CD4-positive, alpha-beta T cell (primary cell): ENCODE measurements at regions of chr5 and their contacts with region 1.

Region 1: GRCh38 chr5:134738133-134738962 is at the start of gene CAMLG:
- DNase-seq: peak; percentile 92 to 99 (median 96)
- ATAC-seq: peak; percentile 96
- H3K4me3 ChIP-seq: peak within 1 kb of the TSS; percentile 98
- H3K4me3 Mint-ChIP-seq: peak within 1 kb of the TSS; percentile 92
- H3K27ac ChIP-seq: peak within 1 kb of the TSS; percentile 77 to 93
- H3K27ac Mint-ChIP-seq: peak within 1 kb of the TSS; percentile 86
- H3K4me1 ChIP-seq: peaks cover 28% of the 10 kb centered on the region
- H3K4me1 Mint-ChIP-seq: peaks cover 34% of the 10 kb centered on the region
- H3K27me3 ChIP-seq: no peaks in the 10 kb centered on the region
- H3K27me3 Mint-ChIP-seq: no peaks in the 10 kb centered on the region
- CTCF ChIP-seq: peak; percentile 63
- total RNA-seq, gene CAMLG: 49.3 to 51.1 TPM

Region 2: DNA sequence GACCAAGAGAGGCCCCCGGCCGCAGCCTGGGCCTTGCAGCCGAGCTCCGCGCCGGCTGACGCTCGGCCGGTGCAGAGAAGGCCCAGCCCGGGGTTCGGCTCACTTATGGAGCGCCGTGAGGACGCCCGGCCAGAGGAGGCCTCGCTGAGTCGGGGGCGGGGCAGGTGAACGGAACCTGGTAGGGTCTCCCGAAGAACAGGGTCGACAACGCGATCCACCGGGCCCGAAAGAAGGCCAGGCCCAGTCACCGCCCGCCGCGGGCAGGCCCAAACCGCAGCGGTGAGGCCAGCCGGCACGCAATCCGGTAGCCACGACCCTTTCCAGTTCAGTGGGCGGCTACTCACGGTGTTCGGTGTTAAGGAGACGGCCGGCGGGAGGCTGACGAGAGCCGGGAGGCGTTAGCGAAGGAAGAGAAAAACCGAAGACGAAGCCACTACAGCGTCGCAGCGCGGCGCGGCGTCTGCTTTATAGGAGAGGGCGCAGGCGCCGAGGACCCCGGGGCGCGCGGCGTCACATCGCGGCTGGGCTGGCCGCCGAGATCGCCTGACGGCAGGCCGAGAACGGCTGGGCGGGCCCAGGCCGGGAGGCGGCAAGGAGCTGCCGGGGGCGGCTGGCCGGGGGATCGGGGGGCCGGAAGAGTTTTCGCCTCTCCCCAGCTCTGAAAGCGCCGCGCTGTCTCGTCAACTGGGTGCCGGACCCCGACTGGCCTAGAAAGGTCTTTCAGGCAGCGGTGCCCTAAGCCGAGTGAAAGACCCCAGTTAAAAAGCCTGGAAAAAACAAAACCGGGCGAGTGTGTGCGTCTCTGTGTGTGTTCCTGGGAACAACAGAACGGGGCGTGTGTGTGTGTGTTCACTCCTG is 561.6 kb before region 1 on chr5 and contains the start of gene SKP1:
- CTCF ChIA-PET with region 1: no interaction called
- POLR2A ChIA-PET with region 1: no interaction called
- intact Hi-C with region 1: loop called in 1 of 2 experiments (anchors 5 kb)
- DNase-seq: peak; percentile 76 to 94 (median 86)
- ATAC-seq: peak; percentile 83
- H3K4me3 ChIP-seq: peak within 1 kb of the TSS; percentile 98
- H3K4me3 Mint-ChIP-seq: peak within 1 kb of the TSS; percentile 97
- H3K27ac ChIP-seq: peak within 1 kb of the TSS; percentile 98 to 99
- H3K27ac Mint-ChIP-seq: peak within 1 kb of the TSS; percentile 98
- H3K4me1 ChIP-seq: peaks cover 19% of the 10 kb centered on the region
- H3K4me1 Mint-ChIP-seq: peaks cover 36% of the 10 kb centered on the region
- H3K27me3 ChIP-seq: no peaks in the 10 kb centered on the region
- H3K27me3 Mint-ChIP-seq: no peaks in the 10 kb centered on the region
- CTCF ChIP-seq: no peak
- total RNA-seq, gene SKP1: 303 to 314 TPM

Region 3: DNA sequence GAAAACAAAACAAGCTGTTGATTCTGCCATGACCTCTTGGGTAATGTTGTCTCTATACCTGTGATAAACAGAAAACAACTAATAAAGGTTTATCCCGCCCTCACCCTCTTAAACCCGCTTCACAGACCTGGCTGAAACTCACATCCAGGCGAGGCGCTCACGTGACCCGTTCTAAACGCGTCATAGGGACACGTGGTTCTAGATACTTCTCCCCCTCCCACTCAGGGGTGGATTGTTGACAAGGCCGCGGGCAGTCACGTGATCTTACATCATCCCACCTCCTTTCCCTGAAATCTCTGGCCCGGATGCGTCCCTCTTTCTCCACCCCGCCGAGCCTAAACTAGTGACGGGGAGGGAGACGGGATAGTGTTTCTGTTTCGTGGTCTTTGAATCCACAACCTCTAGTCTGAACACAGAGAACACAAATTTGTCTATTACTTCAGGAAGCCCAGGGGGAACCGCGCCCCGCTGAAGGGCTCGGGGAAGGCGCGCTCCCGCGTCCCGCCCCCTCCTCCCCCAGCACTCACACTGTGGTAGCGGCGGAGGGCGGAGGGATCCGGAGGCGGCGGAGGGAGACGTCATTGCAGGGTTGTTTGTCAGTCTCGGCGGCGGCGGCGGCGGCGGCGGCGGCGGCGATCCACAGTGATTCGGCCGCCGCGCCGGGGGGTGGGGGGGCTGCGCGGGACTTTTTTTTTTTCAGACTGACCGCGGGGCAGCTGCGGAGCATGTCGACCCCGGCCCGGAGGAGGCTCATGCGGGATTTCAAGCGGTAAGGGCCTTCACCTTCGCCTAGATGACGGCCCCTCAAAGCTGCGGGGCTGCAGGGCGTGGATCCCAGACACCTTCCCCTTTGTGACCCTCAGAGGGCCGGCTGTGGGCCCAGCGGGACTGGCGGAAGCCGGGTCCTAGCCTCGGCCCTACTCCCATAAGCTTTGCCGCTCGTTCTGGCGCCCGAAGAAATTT is 367.2 kb before region 1 on chr5 and contains the start of gene UBE2B:
- CTCF ChIA-PET with region 1: interaction called, 4 read pairs
- POLR2A ChIA-PET with region 1: interaction called, 3 read pairs
- intact Hi-C with region 1: loop called in 1 of 2 experiments (anchors 5 kb)
- DNase-seq: peak; percentile 93 to 99 (median 97)
- ATAC-seq: peak; percentile 73
- H3K4me3 ChIP-seq: peak within 1 kb of the TSS; percentile 100
- H3K4me3 Mint-ChIP-seq: peak within 1 kb of the TSS; percentile 96
- H3K27ac ChIP-seq: peak within 1 kb of the TSS; percentile 97 to 98
- H3K27ac Mint-ChIP-seq: peak within 1 kb of the TSS; percentile 97
- H3K4me1 ChIP-seq: peaks cover 37% of the 10 kb centered on the region
- H3K4me1 Mint-ChIP-seq: peaks cover 68% of the 10 kb centered on the region
- H3K27me3 ChIP-seq: no peaks in the 10 kb centered on the region
- H3K27me3 Mint-ChIP-seq: peaks cover 4% of the 10 kb centered on the region
- CTCF ChIP-seq: no peak
- total RNA-seq, gene UBE2B: 225 to 228 TPM

Region 4: DNA sequence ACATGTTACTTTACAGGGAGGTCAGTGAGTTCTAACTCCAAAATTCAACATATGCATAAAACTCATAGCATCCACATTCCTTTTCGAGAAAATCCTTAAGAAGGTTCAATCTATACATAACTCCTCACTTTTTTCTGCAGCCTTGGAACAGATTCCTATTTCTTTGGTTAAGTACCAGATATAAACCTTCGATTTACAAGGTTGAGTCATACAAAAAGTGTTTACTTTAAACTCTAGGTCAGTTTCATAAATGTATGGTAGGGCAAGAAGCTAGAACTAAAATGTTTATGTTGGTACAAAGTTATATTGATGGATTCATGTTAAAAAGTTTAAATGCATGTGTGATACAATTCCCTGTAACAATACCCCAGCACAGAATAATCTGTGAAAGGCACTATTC is 346.0 kb before region 1 on chr5:
- CTCF ChIA-PET with region 1: no interaction called
- POLR2A ChIA-PET with region 1: no interaction called
- intact Hi-C with region 1: no loop called
- DNase-seq: no peak
- ATAC-seq: no peak
- H3K4me3 ChIP-seq: no peak overlapping the region
- H3K4me3 Mint-ChIP-seq: no peak overlapping the region
- H3K27ac ChIP-seq: no peak overlapping the region
- H3K27ac Mint-ChIP-seq: no peak overlapping the region
- H3K4me1 ChIP-seq: no peaks in the 10 kb centered on the region
- H3K4me1 Mint-ChIP-seq: peaks cover 5% of the 10 kb centered on the region
- H3K27me3 ChIP-seq: no peaks in the 10 kb centered on the region
- H3K27me3 Mint-ChIP-seq: no peaks in the 10 kb centered on the region
- CTCF ChIP-seq: no peak

Region 5: DNA sequence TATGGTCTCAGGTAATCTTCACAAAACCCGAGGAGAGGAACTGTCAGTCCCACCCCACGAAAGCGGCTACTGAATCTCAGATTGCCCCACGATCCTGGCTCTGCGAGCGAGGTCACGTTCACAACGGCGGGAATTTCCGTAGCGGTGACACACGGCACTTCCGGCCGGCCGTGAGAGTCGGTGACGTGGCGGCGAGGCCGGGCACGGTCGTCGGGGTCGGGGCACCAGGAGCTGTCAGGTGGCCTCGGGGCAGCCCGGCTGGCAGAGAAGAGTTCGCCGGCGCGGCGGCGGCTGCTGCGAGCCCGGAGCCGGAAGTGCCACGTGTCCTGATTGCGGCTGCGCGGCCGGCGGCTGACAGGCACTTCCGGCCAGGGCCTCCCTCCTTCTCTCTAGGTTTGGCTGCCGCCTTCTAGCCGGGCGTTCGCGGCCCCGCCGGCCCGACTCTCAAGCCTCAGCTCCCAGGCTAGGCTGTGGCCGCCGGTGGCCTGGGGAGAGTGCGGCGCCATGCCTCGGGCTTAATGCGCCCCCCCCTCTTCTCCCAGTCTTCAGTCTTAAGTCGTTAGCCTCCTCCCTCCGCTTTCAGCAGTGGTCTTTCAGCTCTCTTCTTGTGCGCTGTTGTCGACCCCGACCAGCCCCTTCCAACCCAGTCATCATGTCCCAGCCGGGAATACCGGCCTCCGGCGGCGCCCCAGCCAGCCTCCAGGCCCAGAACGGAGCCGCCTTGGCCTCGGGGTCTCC is 89.8 kb before region 1 on chr5 and contains the start of gene SEC24A:
- CTCF ChIA-PET with region 1: interaction called, 3 read pairs
- POLR2A ChIA-PET with region 1: interaction called, 6 read pairs
- intact Hi-C with region 1: loop called in 1 of 2 experiments (anchors 2 kb)
- DNase-seq: peak; percentile 74 to 98 (median 82)
- ATAC-seq: peak; percentile 78
- H3K4me3 ChIP-seq: peak within 1 kb of the TSS; percentile 80
- H3K4me3 Mint-ChIP-seq: peak within 1 kb of the TSS; percentile 99
- H3K27ac ChIP-seq: peak within 1 kb of the TSS; percentile 93 to 98
- H3K27ac Mint-ChIP-seq: peak within 1 kb of the TSS; percentile 95
- H3K4me1 ChIP-seq: peaks cover 27% of the 10 kb centered on the region
- H3K4me1 Mint-ChIP-seq: peaks cover 31% of the 10 kb centered on the region
- H3K27me3 ChIP-seq: no peaks in the 10 kb centered on the region
- H3K27me3 Mint-ChIP-seq: no peaks in the 10 kb centered on the region
- CTCF ChIP-seq: no peak
- total RNA-seq, gene SEC24A: 11.7 to 12.3 TPM

Region 6: DNA sequence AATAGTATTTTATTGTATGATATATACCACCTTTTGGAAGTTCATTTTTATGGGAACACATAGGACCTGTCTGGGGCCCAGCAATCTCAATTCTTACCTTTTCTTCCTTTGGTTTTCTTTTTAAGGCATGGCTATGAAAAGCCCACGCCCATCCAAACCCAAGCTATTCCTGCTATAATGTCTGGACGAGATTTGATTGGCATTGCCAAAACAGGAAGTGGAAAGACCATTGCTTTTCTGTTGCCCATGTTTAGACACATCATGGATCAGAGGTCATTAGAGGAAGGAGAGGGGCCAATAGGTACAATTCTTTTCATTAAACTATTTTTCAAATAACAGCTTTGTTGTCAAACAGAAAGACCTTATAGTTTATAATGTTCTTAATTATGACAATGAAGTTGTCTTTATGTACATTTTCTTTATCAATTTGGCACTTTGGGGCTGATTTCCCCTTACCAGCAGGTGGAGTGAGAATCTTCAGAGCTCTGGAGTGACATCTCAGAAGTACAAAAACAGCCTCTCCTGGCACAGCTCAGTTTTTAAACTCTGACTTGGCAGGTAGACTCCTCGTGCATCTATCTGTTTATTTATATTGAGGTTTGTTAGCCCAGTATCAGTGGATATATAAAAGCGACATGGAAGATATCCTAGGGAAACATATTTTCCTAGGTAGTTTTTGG is 46.0 kb after region 1 on chr5:
- CTCF ChIA-PET with region 1: no interaction called
- POLR2A ChIA-PET with region 1: no interaction called
- intact Hi-C with region 1: loop called in 1 of 2 experiments (anchors 10 kb)
- DNase-seq: peak in 5 of 14 experiments; percentile 9 to 39 (median 29)
- ATAC-seq: no peak
- H3K4me3 ChIP-seq: no peak overlapping the region
- H3K4me3 Mint-ChIP-seq: no peak overlapping the region
- H3K27ac ChIP-seq: no peak overlapping the region
- H3K27ac Mint-ChIP-seq: no peak overlapping the region
- H3K4me1 ChIP-seq: no peaks in the 10 kb centered on the region
- H3K4me1 Mint-ChIP-seq: no peaks in the 10 kb centered on the region
- H3K27me3 ChIP-seq: no peaks in the 10 kb centered on the region
- H3K27me3 Mint-ChIP-seq: no peaks in the 10 kb centered on the region
- CTCF ChIP-seq: peak; percentile 25

Region 7: DNA sequence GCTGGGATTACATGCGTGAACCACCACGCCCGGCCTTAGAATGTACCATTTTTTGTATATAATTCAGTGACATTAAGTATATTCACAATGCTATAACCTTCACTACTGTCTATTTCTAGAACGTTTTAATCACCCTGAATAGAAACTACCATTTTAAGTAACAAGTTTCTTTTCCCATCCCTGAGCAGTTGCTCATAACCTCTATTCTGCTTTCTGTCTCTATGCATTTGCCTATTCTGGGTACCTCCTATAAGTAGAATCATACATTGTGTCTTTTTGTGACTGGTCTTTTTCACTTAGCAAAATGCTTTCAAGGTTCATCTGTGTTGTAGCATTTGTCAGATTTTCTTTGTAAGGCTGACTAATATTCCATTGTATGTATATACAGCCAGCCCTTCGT is 60.1 kb after region 1 on chr5:
- CTCF ChIA-PET with region 1: no interaction called
- POLR2A ChIA-PET with region 1: no interaction called
- intact Hi-C with region 1: no loop called
- DNase-seq: no peak
- ATAC-seq: no peak
- H3K4me3 ChIP-seq: no peak overlapping the region
- H3K4me3 Mint-ChIP-seq: no peak overlapping the region
- H3K27ac ChIP-seq: no peak overlapping the region
- H3K27ac Mint-ChIP-seq: no peak overlapping the region
- H3K4me1 ChIP-seq: no peaks in the 10 kb centered on the region
- H3K4me1 Mint-ChIP-seq: no peaks in the 10 kb centered on the region
- H3K27me3 ChIP-seq: no peaks in the 10 kb centered on the region
- H3K27me3 Mint-ChIP-seq: no peaks in the 10 kb centered on the region
- CTCF ChIP-seq: no peak

Region 8: GRCh38 chr5:134873987-134874830 is 135.9 kb after region 1 on chr5 and contains the start of gene TXNDC15:
- CTCF ChIA-PET with region 1: no interaction called
- POLR2A ChIA-PET with region 1: interaction called, 14 read pairs
- intact Hi-C with region 1: no loop called
- DNase-seq: peak; percentile 66 to 92 (median 76)
- ATAC-seq: peak; percentile 92
- H3K4me3 ChIP-seq: peak within 1 kb of the TSS; percentile 68
- H3K4me3 Mint-ChIP-seq: peak within 1 kb of the TSS; percentile 96
- H3K27ac ChIP-seq: peak within 1 kb of the TSS; percentile 87 to 88
- H3K27ac Mint-ChIP-seq: peak within 1 kb of the TSS; percentile 93
- H3K4me1 ChIP-seq: peaks cover 39% of the 10 kb centered on the region
- H3K4me1 Mint-ChIP-seq: peaks cover 43% of the 10 kb centered on the region
- H3K27me3 ChIP-seq: no peaks in the 10 kb centered on the region
- H3K27me3 Mint-ChIP-seq: no peaks in the 10 kb centered on the region
- CTCF ChIP-seq: no peak
- total RNA-seq, gene TXNDC15: 19.6 to 20.0 TPM

Region 9: DNA sequence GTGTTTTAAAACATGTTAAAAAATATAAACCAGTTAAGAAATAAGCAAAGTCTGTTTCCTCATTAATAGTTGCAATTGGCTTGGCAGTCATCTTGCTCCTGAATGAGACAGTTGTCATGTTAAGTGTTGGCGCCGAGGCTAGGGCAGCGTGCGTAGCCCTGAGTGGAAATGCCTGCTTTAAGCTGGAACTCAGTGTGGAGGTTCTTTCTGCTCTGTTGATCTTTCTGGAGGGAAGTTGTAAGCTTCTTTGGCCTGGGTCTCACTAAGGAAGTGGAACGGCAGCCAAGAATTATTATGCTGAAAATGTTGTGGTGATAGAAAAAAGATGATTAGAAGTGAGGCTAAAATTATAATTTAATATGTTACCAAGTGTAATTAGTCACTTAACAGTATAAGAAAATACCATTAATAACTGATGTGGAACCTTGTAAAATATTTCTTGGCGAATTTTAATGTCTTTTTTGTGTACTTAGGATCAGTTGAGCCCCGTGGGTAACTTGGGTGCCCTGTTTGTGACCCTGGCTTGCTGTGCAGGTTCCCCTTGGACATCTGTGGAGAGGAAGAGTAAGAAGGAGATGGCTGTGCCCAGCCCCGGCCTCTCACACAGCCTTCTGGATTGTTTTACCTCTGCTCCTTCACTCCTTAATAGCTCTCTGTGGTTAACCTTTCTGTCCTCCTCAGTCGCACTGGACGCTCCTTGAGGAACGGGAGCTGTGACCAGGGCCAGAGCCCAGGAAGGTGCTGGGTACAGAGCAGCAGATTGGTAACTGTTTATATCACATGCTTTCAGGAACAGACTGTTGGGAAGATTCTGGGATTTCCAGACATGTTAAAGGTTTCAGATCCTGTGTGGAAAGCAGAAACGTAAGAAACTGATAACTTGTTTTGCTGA is 197.6 kb after region 1 on chr5:
- CTCF ChIA-PET with region 1: no interaction called
- POLR2A ChIA-PET with region 1: no interaction called
- intact Hi-C with region 1: no loop called
- DNase-seq: no peak
- ATAC-seq: no peak
- H3K4me3 ChIP-seq: no peak overlapping the region
- H3K4me3 Mint-ChIP-seq: no peak overlapping the region
- H3K27ac ChIP-seq: no peak overlapping the region
- H3K27ac Mint-ChIP-seq: no peak overlapping the region
- H3K4me1 ChIP-seq: no peaks in the 10 kb centered on the region
- H3K4me1 Mint-ChIP-seq: no peaks in the 10 kb centered on the region
- H3K27me3 ChIP-seq: no peaks in the 10 kb centered on the region
- H3K27me3 Mint-ChIP-seq: no peaks in the 10 kb centered on the region
- CTCF ChIP-seq: no peak

Region 10: GRCh38 chr5:135230251-135230925 is 492.0 kb after region 1 on chr5:
- CTCF ChIA-PET with region 1: no interaction called
- POLR2A ChIA-PET with region 1: no interaction called
- intact Hi-C with region 1: no loop called
- DNase-seq: peak in 2 of 14 experiments; percentile 22 to 34
- ATAC-seq: no peak
- H3K4me3 ChIP-seq: no peak overlapping the region
- H3K4me3 Mint-ChIP-seq: no peak overlapping the region
- H3K27ac ChIP-seq: no peak overlapping the region
- H3K27ac Mint-ChIP-seq: no peak overlapping the region
- H3K4me1 ChIP-seq: no peaks in the 10 kb centered on the region
- H3K4me1 Mint-ChIP-seq: no peaks in the 10 kb centered on the region
- H3K27me3 ChIP-seq: no peaks in the 10 kb centered on the region
- H3K27me3 Mint-ChIP-seq: no peaks in the 10 kb centered on the region
- CTCF ChIP-seq: no peak